IMR-90 (cell line): ENCODE measurements at regions of chr20 and their contacts with region 1.

Region 1: DNA sequence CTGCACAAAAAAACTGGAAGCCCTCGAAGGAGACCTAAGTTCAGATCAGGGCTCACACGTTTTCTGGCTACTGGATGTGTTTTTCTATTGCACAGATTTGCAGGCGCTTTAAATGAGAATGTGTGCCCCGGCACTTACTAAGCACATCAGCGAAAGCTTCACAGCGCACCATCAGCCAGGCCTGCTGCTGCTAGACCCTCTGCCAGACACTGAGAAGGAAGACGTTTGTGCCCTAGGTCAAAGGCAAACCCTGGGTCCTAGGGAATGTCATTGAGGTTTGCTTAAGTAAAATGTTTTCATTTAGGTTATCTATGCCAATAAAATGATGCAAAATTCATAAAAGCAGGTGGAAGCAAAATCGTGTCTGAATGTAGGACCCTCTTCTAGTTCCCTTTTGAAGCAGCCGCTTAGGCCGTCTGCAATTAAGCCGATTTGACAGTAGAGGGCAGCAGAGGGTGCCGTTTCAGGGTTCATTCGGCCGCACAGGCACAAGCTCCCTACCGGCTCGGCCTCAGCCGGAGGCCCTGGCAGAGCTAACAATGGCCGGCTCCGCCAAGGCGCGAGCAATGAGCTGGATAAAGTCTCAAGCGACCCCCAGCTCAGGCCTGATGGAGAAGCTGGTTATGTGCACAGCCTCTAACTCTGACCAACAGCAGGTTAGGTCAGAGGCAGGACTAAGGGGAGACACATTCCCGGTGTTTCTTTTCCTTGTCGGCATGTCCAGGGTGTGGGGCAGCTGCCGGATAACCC is 107.2 kb upstream of the FOXA2 start:
- DNase-seq: peak; percentile 63
- ATAC-seq: peak; percentile 100
- H3K4me3 ChIP-seq: no peak overlapping the region
- H3K27ac ChIP-seq: no peak overlapping the region
- H3K4me1 ChIP-seq: no peaks in the 10 kb centered on the region
- H3K27me3 ChIP-seq: no peaks in the 10 kb centered on the region; the same call in 1 of the 2 replicates
- CTCF ChIP-seq: peak; percentile 94
- POLR2A ChIP-seq: no peak
- RAD21 ChIP-seq: peak; percentile 92

Region 2: GRCh38 chr20:22974353-22974752 is 282.8 kb after region 1 on chr20:
- CTCF ChIA-PET with region 1: interaction called, 3 read pairs
- POLR2A ChIA-PET with region 1: no interaction called
- dilution Hi-C with region 1: no loop called
- in situ Hi-C with region 1: no loop called
- intact Hi-C with region 1: loop called (anchors 1 kb)
- DNase-seq: no peak
- ATAC-seq: no peak
- H3K4me3 ChIP-seq: no peak overlapping the region
- H3K27ac ChIP-seq: no peak overlapping the region
- H3K4me1 ChIP-seq: no peaks in the 10 kb centered on the region
- H3K27me3 ChIP-seq: peaks cover 3% of the 10 kb centered on the region
- CTCF ChIP-seq: peak; percentile 33
- POLR2A ChIP-seq: no peak
- RAD21 ChIP-seq: peak; percentile 47

Region 3: GRCh38 chr20:23235173-23236027 is 543.9 kb after region 1 on chr20:
- CTCF ChIA-PET with region 1: interaction called, 19 read pairs
- POLR2A ChIA-PET with region 1: no interaction called
- dilution Hi-C with region 1: no loop called
- in situ Hi-C with region 1: loop called (anchors 10 kb)
- intact Hi-C with region 1: loop called (anchors 1 kb)
- DNase-seq: peak; percentile 54
- ATAC-seq: peak; percentile 71
- H3K4me3 ChIP-seq: no peak overlapping the region
- H3K27ac ChIP-seq: no peak overlapping the region
- H3K4me1 ChIP-seq: peaks cover 5% of the 10 kb centered on the region; the same call in 1 of the 2 replicates
- H3K27me3 ChIP-seq: peaks cover 4% of the 10 kb centered on the region; the same call in 1 of the 2 replicates
- CTCF ChIP-seq: peak; percentile 67
- POLR2A ChIP-seq: no peak
- RAD21 ChIP-seq: peak; percentile 79

Region 4: GRCh38 chr20:23245553-23246181 is 554.1 kb after region 1 on chr20:
- CTCF ChIA-PET with region 1: no interaction called
- POLR2A ChIA-PET with region 1: no interaction called
- dilution Hi-C with region 1: no loop called
- in situ Hi-C with region 1: no loop called
- intact Hi-C with region 1: loop called (anchors 2 kb)
- DNase-seq: peak; percentile 33
- ATAC-seq: peak; percentile 96
- H3K4me3 ChIP-seq: no peak overlapping the region
- H3K27ac ChIP-seq: no peak overlapping the region
- H3K4me1 ChIP-seq: no peaks in the 10 kb centered on the region; the same call in 1 of the 2 replicates
- H3K27me3 ChIP-seq: peaks cover 9% of the 10 kb centered on the region; the same call in 1 of the 2 replicates
- CTCF ChIP-seq: peak; percentile 48
- POLR2A ChIP-seq: no peak
- RAD21 ChIP-seq: peak; percentile 46

Region 5: GRCh38 chr20:23340524-23340923 is 649.0 kb after region 1 on chr20:
- CTCF ChIA-PET with region 1: interaction called, 56 read pairs
- POLR2A ChIA-PET with region 1: no interaction called
- dilution Hi-C with region 1: no loop called
- in situ Hi-C with region 1: loop called (anchors 5 kb)
- intact Hi-C with region 1: loop called (anchors 1 kb)
- DNase-seq: peak; percentile 69
- ATAC-seq: peak; percentile 84
- H3K4me3 ChIP-seq: no peak overlapping the region
- H3K27ac ChIP-seq: no peak overlapping the region
- H3K4me1 ChIP-seq: no peaks in the 10 kb centered on the region
- H3K27me3 ChIP-seq: peaks cover 13% of the 10 kb centered on the region
- CTCF ChIP-seq: peak; percentile 73
- POLR2A ChIP-seq: no peak
- RAD21 ChIP-seq: peak; percentile 89

Region 6: GRCh38 chr20:23606652-23607049 is 915.1 kb after region 1 on chr20:
- CTCF ChIA-PET with region 1: no interaction called
- POLR2A ChIA-PET with region 1: no interaction called
- dilution Hi-C with region 1: no loop called
- in situ Hi-C with region 1: no loop called
- intact Hi-C with region 1: loop called (anchors 10 kb)
- DNase-seq: peak; percentile 64
- ATAC-seq: peak; percentile 99
- H3K4me3 ChIP-seq: no peak overlapping the region
- H3K27ac ChIP-seq: no peak overlapping the region
- H3K4me1 ChIP-seq: no peaks in the 10 kb centered on the region
- H3K27me3 ChIP-seq: peaks cover 31% of the 10 kb centered on the region
- CTCF ChIP-seq: peak; percentile 89
- POLR2A ChIP-seq: 0 out of 2 replicates have a peak, but pooled peaks have one; percentile 25
- RAD21 ChIP-seq: peak; percentile 89